Activated T-helper 1 cell treated with anti-CD3 and anti-CD28 coated beads, Interleukin-12 subunit alpha, Interleukin-12 subunit beta, Interleukin-2, Interleukin-4 antibody, amounts not matched to agents 30 ng/mL and 10 ng/mL and 1 ng/mL, durations not matched to agents 14 hours and 24 hours and 36 hours (primary cell): ENCODE measurements at regions of chr6 and their contacts with region 1.

Region 1: GRCh38 chr6:38131527-38131965 is 312.0 kb downstream of the ZFAND3 start:
- DNase-seq: no peak
- H3K4me3 Mint-ChIP-seq: peak overlapping the region; percentile 61
- H3K27ac Mint-ChIP-seq: peak overlapping the region; percentile 73
- H3K4me1 Mint-ChIP-seq: peaks cover 15% of the 10 kb centered on the region
- H3K27me3 Mint-ChIP-seq: no peaks in the 10 kb centered on the region

Region 2: DNA sequence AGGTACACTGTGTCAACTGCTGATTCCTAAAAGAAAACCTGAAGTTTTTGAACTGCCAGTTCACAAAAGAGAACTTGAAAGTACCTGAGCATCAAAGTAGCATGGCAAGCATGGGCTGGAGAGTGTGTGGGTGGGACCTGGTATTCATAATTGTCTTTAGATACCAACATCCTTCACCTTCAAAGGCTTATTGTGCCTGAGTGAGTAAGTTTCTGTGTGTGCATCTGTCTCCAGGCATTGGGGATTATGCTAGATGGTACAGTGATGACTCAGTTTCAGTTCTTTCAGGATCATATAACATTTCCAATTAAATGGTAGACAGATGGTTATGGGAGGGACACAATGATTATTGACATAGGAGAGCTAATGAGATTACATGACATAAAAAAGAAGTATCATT is 73.6 kb before region 1 on chr6:
- intact Hi-C with region 1: loop called (anchors 1 kb)
- DNase-seq: no peak
- H3K4me3 Mint-ChIP-seq: no peak overlapping the region
- H3K27ac Mint-ChIP-seq: peak overlapping the region; percentile 18
- H3K4me1 Mint-ChIP-seq: peaks cover 23% of the 10 kb centered on the region
- H3K27me3 Mint-ChIP-seq: no peaks in the 10 kb centered on the region

Region 3: GRCh38 chr6:38169977-38170526 is 38.5 kb after region 1 on chr6:
- intact Hi-C with region 1: no loop called
- DNase-seq: no peak
- H3K4me3 Mint-ChIP-seq: no peak overlapping the region
- H3K27ac Mint-ChIP-seq: no peak overlapping the region
- H3K4me1 Mint-ChIP-seq: no peaks in the 10 kb centered on the region
- H3K27me3 Mint-ChIP-seq: no peaks in the 10 kb centered on the region

Region 4: GRCh38 chr6:38271081-38271752 is 139.7 kb after region 1 on chr6:
- intact Hi-C with region 1: no loop called
- DNase-seq: no peak
- H3K4me3 Mint-ChIP-seq: no peak overlapping the region
- H3K27ac Mint-ChIP-seq: no peak overlapping the region
- H3K4me1 Mint-ChIP-seq: no peaks in the 10 kb centered on the region
- H3K27me3 Mint-ChIP-seq: no peaks in the 10 kb centered on the region